ENCODE measurements at regions of chrX and their contacts with region 1.

Region 1: DNA sequence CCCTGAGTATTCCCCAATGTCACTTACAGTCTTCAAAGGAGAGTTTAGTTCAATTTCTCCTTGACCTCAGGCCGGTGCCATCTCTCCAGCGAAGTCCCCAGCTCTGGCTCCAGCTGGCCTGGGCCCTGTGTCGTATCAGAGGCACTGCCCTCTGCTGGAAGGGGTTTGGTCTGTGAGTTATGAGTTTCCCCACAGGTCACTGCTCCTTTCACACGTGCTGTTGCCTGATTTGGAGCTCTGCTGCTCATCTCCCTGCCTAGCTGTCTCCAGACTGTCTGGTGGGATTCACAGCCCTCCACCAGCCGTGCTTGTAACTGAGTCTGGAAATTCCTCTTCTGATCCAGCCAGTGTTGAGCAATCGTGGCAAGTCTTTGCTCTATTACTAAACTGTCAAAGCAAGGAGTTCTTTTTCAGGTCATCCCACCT is at the start of gene RAP2C:
- DNase-seq: peak; percentile 65 to 71
- H3K4me3 ChIP-seq: peak within 1 kb of the TSS; percentile 98
- H3K27ac ChIP-seq: peak within 1 kb of the TSS; percentile 77
- H3K4me1 ChIP-seq: peaks cover 31% of the 10 kb centered on the region
- H3K27me3 ChIP-seq: no peaks in the 10 kb centered on the region
- CTCF ChIP-seq: peak; percentile 75
- total RNA-seq, gene RAP2C: 27.8 and 30.6 TPM in 2 replicates

Region 2: DNA sequence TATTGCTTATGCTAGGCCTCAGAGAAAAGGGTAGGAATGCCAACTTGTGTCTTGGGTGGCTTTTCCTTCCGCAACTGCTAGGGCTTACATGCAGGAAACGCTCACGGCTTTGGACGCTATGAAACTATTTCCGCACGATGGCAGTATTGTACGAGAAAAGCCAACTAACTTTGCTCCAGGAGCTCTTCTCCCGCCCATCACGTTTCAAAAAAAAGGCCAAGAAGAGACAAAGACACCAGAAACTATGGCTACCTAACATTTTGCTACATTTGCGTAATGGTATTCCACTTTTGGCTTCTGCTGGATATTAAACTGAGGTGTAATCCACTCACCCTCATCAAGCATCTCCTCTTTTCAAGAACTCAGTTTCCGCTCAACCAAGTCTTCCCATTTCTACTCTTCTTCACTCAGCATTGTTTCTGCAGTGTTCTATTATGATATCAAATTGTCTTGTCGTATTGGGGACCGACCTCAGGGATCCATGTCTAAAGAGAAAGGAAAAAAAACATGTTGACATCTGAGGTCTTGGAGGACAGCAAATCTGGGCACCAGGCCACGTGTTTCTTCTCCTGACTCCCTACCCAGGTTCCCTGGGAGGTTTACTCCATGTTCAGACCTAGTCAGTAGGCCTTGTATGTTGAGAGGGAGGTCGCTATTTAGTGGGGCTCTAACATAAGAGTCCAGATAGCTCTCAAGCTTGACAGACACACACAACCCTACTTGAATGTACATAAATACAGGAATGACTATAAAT is 435.6 kb before region 1 on chrX:
- CTCF ChIA-PET with region 1: no interaction called
- POLR2A ChIA-PET with region 1: no interaction called
- intact Hi-C with region 1: no loop called
- DNase-seq: no peak
- H3K4me3 ChIP-seq: no peak overlapping the region
- H3K27ac ChIP-seq: no peak overlapping the region
- H3K4me1 ChIP-seq: no peaks in the 10 kb centered on the region
- H3K27me3 ChIP-seq: no peaks in the 10 kb centered on the region
- CTCF ChIP-seq: no peak

Region 3: DNA sequence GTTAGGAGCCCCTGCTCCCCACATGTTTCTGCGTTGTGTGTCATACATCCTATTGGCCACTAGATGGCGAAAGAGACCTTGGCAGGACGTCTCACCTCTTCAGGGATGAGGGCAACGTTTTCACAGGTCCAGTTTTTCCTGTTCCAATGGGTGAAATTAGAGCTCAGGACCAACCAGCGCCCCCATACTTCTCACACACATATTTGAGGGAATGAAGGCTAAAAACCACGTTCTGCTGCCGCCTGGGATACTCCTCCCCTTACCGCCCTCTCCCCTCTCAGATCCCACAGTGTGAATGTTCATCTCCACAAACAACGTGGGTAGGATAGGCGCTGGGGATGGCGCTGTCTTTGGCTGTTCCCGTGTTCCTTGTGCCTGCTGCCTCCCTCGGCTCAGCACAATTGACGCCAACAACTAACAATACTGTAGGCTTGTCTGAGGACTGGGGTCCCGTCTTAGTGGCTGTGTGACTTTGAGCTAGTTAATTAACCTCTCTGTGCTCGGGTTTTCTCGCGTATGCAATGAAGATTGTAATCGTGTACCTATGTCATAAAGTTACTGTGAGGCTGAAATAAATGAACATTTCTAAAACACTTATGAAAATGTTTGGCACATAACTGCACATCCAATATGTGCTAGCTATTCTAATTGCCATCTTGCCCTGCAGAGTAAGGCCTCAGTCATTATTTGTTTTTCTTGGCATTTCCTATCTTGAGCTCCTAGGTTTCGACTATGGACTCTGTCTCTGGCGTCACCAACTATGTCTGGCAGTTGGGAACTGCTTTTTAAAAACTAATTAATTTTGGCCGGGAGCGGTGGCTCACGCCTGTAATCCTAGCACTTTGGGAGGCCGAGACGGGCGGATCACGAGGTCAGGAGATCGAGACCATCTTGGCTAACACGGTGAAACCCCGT is 377.6 kb before region 1 on chrX:
- CTCF ChIA-PET with region 1: interaction called, 7 read pairs
- POLR2A ChIA-PET with region 1: interaction called, 14 read pairs
- intact Hi-C with region 1: loop called (anchors 1 kb)
- DNase-seq: peak; percentile 45 to 78
- H3K4me3 ChIP-seq: peak overlapping the region; percentile 25; the same call in 1 of the 2 replicates
- H3K27ac ChIP-seq: no peak overlapping the region
- H3K4me1 ChIP-seq: peaks cover 11% of the 10 kb centered on the region
- H3K27me3 ChIP-seq: no peaks in the 10 kb centered on the region
- CTCF ChIP-seq: peak; percentile 96

Region 4: DNA sequence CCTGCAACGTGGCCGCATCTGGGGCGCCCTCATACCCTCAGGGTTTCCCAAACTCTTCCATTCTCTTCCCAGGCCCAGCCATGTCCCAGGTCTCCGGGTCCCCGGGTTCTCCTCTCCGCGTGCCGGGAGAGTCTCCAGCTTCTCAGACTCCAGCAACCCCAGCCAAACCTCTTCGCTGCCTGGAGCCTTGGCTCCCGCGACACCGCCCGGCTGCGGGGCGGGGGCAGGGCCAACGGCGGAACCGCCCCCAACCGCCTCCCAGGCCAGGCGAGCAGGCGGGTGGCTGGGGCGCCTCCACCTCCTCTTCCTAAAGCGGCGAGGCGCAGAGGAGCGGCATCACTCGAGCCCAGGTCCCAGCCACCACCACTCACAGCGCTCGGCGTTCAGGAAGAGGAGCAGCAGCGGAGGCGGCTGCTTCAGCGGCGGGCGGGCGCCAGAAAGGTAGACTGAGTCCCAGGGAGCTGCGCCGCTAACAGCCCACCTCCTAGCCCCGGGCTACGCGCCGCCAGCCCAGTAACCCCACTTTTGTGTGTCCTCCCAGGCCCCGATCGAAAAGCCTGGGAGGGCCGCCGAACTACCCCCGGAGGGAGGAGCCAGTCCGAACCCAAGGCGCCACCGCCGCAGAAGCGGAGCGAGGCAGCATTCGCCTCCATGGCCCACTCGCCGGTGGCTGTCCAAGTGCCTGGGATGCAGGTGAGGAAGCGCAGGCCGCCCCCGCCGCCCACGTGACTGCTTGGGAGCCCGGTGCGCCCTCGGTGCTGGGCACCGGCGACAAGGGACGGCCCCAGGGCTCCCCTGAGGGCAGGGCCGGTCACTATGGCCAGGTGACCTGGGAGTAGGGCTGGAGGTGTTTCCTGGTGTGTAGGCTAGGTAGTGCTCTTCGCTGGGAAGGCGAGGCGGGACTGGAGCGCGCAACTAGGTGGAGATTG is 196.1 kb before region 1 on chrX and contains the start of gene STK26:
- CTCF ChIA-PET with region 1: no interaction called
- POLR2A ChIA-PET with region 1: no interaction called
- intact Hi-C with region 1: loop called (anchors 2 kb)
- DNase-seq: peak; percentile 76 to 92
- H3K4me3 ChIP-seq: peak within 1 kb of the TSS; percentile 91
- H3K27ac ChIP-seq: peak within 1 kb of the TSS; percentile 85
- H3K4me1 ChIP-seq: peaks cover 35% of the 10 kb centered on the region
- H3K27me3 ChIP-seq: no peaks in the 10 kb centered on the region
- CTCF ChIP-seq: no peak
- total RNA-seq, gene STK26: 41.1 and 48.4 TPM in 2 replicates

Region 5: DNA sequence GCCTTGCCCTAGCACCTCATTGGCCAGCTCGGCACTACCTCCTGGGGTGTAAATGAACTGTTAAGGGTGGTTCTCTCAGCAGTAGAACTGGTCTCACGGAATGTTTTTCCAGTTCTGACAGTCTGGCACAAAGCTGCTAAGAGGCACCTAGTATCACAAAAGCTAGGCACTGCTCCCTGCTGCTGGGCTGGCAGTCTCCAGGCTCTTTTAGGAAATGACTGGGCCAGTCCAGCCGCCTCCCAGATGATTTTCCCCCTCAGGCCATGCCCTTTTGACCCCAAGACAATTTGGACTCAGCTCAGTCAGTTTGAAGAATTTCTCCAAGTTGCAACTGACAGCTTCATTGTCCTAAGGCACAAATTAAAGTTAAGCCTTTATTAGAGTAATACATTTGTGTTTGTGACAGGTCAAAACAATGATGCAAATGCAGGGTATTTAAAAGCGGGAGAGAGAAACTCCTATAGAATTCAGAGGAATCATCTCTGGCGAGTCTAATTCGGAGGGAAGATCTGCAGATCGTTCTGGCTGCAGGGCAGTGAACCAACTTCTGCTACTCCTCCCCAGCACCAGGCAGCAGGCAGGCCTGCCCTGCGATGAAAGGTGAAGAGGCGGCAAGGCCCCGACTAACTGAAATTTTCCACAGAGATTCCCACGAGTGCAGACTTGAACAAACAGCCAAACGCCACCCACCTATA is 99.4 kb before region 1 on chrX:
- CTCF ChIA-PET with region 1: interaction called, 3 read pairs
- POLR2A ChIA-PET with region 1: no interaction called
- intact Hi-C with region 1: loop called (anchors 2 kb)
- DNase-seq: peak; percentile 76 to 89
- H3K4me3 ChIP-seq: peak overlapping the region; percentile 44; the same call in 1 of the 2 replicates
- H3K27ac ChIP-seq: peak overlapping the region; percentile 70
- H3K4me1 ChIP-seq: peaks cover 35% of the 10 kb centered on the region
- H3K27me3 ChIP-seq: no peaks in the 10 kb centered on the region
- CTCF ChIP-seq: no peak

Region 6: DNA sequence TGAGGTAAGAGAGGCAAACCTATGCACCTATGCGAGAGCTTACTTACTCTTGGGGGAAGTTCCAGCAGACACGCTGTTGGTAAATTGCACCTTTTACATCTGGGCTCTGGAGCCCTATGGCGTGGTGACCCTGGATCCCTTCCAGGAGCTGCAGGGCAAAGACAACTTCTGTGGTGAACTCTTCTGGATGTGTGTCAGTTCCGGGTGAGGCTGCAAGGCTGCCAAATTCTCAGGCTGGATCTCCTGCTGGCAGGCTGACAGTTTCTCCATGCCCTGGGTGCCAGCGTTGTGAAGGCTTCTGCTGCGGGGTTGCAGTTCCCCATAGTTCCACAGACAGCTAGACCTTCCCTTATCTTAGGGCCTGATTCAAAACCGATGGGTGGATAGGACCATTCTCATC is 38.0 kb before region 1 on chrX:
- CTCF ChIA-PET with region 1: no interaction called
- POLR2A ChIA-PET with region 1: no interaction called
- intact Hi-C with region 1: no loop called
- DNase-seq: peak; percentile 66 to 84
- H3K4me3 ChIP-seq: no peak overlapping the region
- H3K27ac ChIP-seq: 0 out of 2 replicates have a peak overlapping the region, but pooled peaks have one; percentile 4
- H3K4me1 ChIP-seq: peaks cover 45% of the 10 kb centered on the region
- H3K27me3 ChIP-seq: no peaks in the 10 kb centered on the region
- CTCF ChIP-seq: no peak

Region 7: GRCh38 chrX:133660281-133660680 is 1440.9 kb after region 1 on chrX:
- CTCF ChIA-PET with region 1: no interaction called
- POLR2A ChIA-PET with region 1: no interaction called
- intact Hi-C with region 1: loop called (anchors 10 kb)
- DNase-seq: peak; percentile 29 to 80
- H3K4me3 ChIP-seq: no peak overlapping the region
- H3K27ac ChIP-seq: peak overlapping the region; percentile 58
- H3K4me1 ChIP-seq: peaks cover 32% of the 10 kb centered on the region
- H3K27me3 ChIP-seq: no peaks in the 10 kb centered on the region
- CTCF ChIP-seq: no peak